Natural killer cell (primary cell): ENCODE measurements at regions of chr3 and their contacts with region 1.

Region 1: DNA sequence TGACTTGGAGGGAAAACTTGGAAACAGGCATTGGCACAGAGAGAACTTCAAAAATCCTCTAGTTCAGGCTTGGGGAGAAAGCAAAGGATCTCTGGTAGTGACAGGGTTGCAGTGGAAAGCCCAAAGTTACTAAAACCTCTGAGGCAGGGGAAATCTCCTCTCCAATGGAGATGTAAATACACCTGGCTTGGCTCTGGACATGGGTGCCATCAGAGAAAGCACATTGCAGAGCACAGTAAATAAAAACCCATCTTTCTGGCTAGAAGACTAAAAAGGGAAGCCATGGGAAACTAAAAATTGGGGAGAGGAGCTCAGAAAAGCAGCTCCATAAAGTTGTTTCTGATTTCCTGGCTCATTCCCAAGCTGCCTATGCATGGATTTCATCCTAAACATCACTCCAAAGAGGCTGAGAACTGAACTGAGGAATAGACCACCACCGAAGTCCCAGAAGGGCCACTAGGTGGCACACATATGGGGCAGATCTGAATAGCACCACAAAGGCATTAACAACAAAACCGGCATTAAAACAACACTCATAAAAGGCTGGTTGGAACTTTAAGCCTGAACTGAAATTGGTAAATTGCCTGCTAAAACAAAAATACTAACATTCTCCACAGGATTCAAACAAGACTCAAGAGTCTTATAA is 106.4 kb downstream of the PLD1 start:
- DNase-seq: peak; percentile 22 to 44
- ATAC-seq: peak; percentile 48 to 81 (median 64)
- H3K4me3 ChIP-seq: no peak overlapping the region
- H3K4me3 Mint-ChIP-seq: no peak overlapping the region
- H3K27ac ChIP-seq: no peak overlapping the region
- H3K27ac Mint-ChIP-seq: no peak overlapping the region
- H3K4me1 ChIP-seq: no peaks in the 10 kb centered on the region
- H3K4me1 Mint-ChIP-seq: peaks cover 0 to 4% of the 10 kb centered on the region in 2 donors
- H3K27me3 ChIP-seq: no peaks in the 10 kb centered on the region
- H3K27me3 Mint-ChIP-seq: no peaks in the 10 kb centered on the region
- CTCF ChIP-seq: peak; percentile 65

Region 2: DNA sequence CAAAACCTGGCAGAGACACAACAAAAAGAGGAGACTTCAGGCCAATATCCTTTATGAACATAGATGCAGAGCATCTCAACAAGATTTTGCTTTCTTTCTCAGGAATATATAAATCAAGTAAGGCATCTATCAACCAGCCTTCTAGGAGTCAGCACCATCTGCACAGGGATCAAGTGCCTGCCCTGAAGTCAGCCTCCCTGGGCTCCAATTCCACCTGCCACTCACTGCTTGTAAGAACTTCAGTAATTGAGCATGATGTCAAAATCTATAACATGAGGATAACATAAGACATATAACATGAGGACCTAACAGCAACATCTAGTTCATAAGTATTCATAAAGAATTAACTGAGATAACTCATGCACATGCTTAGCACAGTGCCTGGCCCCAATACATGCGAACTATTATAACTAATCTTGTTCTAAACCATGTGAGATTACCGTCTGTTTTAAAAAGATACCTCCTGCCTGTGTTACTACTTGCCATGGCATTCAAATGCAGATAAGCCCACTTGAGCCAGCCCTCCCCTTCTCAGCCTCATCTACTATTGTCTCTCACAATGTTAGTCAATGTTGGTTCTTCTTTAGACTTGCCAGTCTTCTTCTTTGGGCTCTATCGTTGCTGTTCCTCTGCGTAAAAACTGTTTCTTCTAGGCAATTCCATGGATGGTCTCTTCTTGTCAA is 14.8 kb after region 1 on chr3:
- intact Hi-C with region 1: no loop called
- DNase-seq: no peak
- ATAC-seq: no peak
- H3K4me3 ChIP-seq: no peak overlapping the region
- H3K4me3 Mint-ChIP-seq: no peak overlapping the region
- H3K27ac ChIP-seq: no peak overlapping the region
- H3K27ac Mint-ChIP-seq: no peak overlapping the region
- H3K4me1 ChIP-seq: no peaks in the 10 kb centered on the region
- H3K4me1 Mint-ChIP-seq: no peaks in the 10 kb centered on the region
- H3K27me3 ChIP-seq: no peaks in the 10 kb centered on the region
- H3K27me3 Mint-ChIP-seq: no peaks in the 10 kb centered on the region
- CTCF ChIP-seq: no peak

Region 3: GRCh38 chr3:171772427-171773056 is 68.7 kb after region 1 on chr3:
- intact Hi-C with region 1: loop called (anchors 2 kb)
- DNase-seq: peak in 1 of 2 donors; percentile 66
- ATAC-seq: peak in 1 of 3 donors; percentile 61
- H3K4me3 ChIP-seq: no peak overlapping the region
- H3K4me3 Mint-ChIP-seq: no peak overlapping the region
- H3K27ac ChIP-seq: no peak overlapping the region
- H3K27ac Mint-ChIP-seq: no peak overlapping the region
- H3K4me1 ChIP-seq: peaks cover 4% of the 10 kb centered on the region
- H3K4me1 Mint-ChIP-seq: peaks cover 22 to 28% of the 10 kb centered on the region in 2 donors
- H3K27me3 ChIP-seq: no peaks in the 10 kb centered on the region
- H3K27me3 Mint-ChIP-seq: no peaks in the 10 kb centered on the region
- CTCF ChIP-seq: peak; percentile 69

Region 4: GRCh38 chr3:172341482-172342059 is 637.7 kb after region 1 on chr3:
- intact Hi-C with region 1: loop called (anchors 1 kb)
- DNase-seq: peak in 1 of 2 donors; percentile 77
- ATAC-seq: peak; percentile 75 to 85 (median 83)
- H3K4me3 ChIP-seq: no peak overlapping the region
- H3K4me3 Mint-ChIP-seq: no peak overlapping the region
- H3K27ac ChIP-seq: no peak overlapping the region
- H3K27ac Mint-ChIP-seq: peak overlapping the region in 1 of 2 donors; percentile 51
- H3K4me1 ChIP-seq: no peaks in the 10 kb centered on the region
- H3K4me1 Mint-ChIP-seq: peaks cover 5 to 9% of the 10 kb centered on the region in 2 donors
- H3K27me3 ChIP-seq: no peaks in the 10 kb centered on the region
- H3K27me3 Mint-ChIP-seq: no peaks in the 10 kb centered on the region
- CTCF ChIP-seq: peak; percentile 75